HEK293 (cell line): ENCODE measurements at regions of chrX and their contacts with region 1.

Region 1: GRCh38 chrX:76183289-76184049 is 10.6 kb downstream of the PBDC1 start:
- H3K4me3 ChIP-seq: no peak overlapping the region
- H3K27ac ChIP-seq: peak overlapping the region; percentile 77
- H3K4me1 ChIP-seq: peaks cover 4% of the 10 kb centered on the region
- CTCF ChIP-seq: no peak

Region 2: DNA sequence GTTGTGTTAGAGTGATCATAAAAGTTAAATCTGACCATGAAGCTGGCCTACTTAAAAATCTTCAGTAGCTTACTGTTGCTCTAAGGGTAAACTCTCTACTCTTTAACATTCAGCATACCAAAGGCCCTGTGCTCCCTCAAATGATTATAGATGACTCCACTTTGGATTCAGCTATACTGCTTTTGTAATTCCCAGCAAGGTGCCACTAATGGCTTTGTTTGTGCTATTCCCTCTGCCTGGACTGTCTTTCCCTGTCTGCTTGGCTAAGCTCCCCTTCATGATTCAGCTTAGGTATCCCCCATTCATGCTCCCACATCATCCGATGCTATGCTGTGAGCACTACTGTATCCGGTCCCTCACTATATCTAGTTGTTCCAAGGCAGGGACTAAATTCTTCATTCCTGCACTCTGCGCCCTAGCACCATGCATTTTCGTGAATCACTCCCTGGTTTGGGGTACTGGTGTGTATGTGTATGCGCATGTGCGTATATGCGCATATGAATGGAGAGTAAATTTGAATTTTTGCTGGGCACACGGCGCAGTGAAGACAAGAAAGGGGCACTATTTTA is 11.1 kb before region 1 on chrX:
- CTCF ChIA-PET with region 1: interaction called, 3 read pairs
- POLR2A ChIA-PET with region 1: interaction called, 14 read pairs
- H3K4me3 ChIP-seq: peak overlapping the region; percentile 62
- H3K27ac ChIP-seq: peak overlapping the region; percentile 86; the same call in 1 of the 2 replicates
- H3K4me1 ChIP-seq: no peaks in the 10 kb centered on the region
- CTCF ChIP-seq: no peak